ENCODE measurements at regions of chr2 and their contacts with region 1.

Region 1: GRCh38 chr2:144162652-144163051 is 357.3 kb downstream of the ZEB2 start:
- DNase-seq: no peak
- H3K4me3 ChIP-seq: no peak overlapping the region
- CTCF ChIP-seq: no peak

Region 2: DNA sequence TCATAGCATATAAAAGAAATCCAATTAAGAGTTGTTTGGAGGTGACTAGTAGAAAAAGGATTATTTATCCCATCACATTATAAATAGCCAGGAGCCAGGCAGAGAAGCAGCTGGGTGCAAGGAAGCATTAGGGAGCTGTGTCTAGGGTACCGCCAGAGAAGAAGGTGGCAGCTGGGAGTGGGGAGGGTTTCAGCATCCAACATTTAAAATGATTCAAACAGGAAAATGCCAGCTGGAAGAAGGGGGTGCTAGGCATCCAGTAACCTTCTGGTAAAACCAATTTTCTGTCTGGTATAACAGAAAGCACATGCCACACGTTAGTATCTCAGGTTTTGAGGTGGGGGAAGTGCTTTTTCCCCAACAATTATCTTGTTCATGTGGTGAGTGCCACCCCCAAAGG is 95.1 kb before region 1 on chr2:
- in situ Hi-C with region 1: loop called (anchors 5 kb)
- DNase-seq: no peak
- H3K4me3 ChIP-seq: no peak overlapping the region
- CTCF ChIP-seq: no peak

Region 3: DNA sequence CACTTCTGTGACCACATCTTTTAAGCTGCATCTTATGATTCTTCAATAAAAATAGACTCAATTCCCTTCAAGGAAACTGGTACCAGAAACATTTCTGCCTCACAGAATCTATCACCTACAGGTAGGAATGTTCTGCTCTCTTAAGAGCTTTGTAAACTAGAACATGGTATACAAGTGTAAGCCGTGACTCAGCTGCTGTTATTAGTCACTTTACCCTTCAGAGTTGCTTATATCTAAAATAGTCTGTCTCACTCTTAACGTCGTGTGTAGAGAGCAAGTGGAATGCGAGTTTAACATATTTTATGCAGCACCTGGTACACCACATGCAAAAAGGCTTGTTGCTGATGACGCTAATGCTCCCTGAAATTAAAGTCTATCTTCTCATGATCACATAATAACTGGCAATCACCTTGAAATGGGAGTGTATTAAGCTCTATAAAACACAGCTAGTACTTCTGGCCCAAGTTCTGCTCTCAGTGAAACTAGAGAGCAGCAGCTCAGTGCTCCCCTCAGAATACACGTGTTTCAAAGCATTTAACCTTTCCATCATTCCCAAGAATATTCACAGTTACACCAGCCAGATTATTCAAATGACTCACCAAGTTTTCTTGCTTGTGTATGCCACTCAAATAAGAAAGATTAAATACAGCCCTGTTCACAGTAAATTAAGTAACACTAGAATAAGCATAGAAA is 62.8 kb before region 1 on chr2:
- in situ Hi-C with region 1: no loop called
- DNase-seq: peak; percentile 53
- H3K4me3 ChIP-seq: no peak overlapping the region
- CTCF ChIP-seq: peak; percentile 31

Measured in astrocyte of the cerebellum (primary cell).